ENCODE measurements at regions of chr1 and their contacts with region 1.

Region 1: GRCh38 chr1:93021539-93022134 is 57.4 kb upstream of the MTF2 start:
- DNase-seq: peak; percentile 66
- CTCF ChIP-seq: peak; percentile 81

Region 2: DNA sequence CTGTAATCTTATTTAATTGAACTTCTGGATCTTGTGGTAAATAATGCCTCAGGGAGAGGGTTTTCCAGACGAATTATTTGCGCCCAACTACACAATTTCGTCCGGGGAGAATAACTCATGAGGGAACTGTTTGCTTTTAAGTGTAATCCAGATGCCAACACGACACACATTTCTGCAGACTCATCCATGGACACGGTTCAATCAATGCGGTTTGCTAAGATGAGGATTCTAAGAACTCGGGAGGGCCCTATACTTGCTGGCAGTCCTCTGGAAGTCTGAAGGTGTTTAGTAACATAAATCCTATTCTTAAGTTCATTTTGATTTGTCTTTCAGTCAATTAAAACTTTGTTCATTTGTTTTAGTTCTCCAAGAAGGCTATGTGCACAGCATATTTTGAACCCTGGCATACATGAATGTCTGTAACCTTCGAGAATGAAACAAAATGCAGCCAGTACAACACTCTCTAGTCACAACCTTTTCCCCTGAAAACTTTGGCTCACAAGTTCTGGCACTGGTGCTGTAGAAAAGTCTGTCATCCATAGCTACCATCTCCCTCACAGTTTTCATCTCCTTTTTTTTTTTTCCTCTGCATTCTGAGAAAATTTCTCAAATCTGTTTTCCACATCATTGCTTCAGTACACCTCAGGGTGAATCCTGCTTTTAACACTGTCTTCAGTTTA is 99.1 kb before region 1 on chr1:
- CTCF ChIA-PET with region 1: no interaction called
- POLR2A ChIA-PET with region 1: no interaction called
- DNase-seq: no peak
- CTCF ChIP-seq: no peak

Region 3: GRCh38 chr1:92960395-92961130 is 61.1 kb before region 1 on chr1:
- CTCF ChIA-PET with region 1: no interaction called
- POLR2A ChIA-PET with region 1: no interaction called
- DNase-seq: peak; percentile 73
- CTCF ChIP-seq: peak; percentile 77

Region 4: GRCh38 chr1:92987462-92987861 is 34.2 kb before region 1 on chr1:
- CTCF ChIA-PET with region 1: no interaction called
- POLR2A ChIA-PET with region 1: no interaction called
- DNase-seq: no peak
- CTCF ChIP-seq: no peak

Region 5: GRCh38 chr1:93007941-93008577 is 13.6 kb before region 1 on chr1:
- CTCF ChIA-PET with region 1: interaction called, 31 read pairs
- POLR2A ChIA-PET with region 1: no interaction called
- DNase-seq: no peak
- CTCF ChIP-seq: no peak

Region 6: DNA sequence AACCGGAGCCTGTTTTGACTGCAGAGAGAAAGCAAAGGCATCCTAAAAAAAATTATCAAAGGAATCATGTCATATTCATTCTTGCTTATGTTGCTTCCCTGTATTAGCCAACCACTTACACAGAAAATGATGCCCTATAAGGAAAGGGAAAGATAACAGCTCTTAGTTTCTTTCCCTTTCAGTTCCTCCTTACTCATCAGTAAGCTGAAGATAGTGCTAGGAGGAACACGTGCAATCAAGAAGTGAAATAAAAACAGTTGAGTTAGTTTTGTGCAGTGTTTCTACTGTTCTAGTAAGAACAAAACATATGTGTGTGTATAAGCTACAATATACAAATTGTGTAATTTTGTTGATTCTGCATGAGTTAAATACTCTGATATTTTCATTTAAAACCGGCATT is 12.1 kb after region 1 on chr1:
- CTCF ChIA-PET with region 1: interaction called, 27 read pairs
- POLR2A ChIA-PET with region 1: no interaction called
- DNase-seq: peak; percentile 70
- CTCF ChIP-seq: no peak

Region 7: DNA sequence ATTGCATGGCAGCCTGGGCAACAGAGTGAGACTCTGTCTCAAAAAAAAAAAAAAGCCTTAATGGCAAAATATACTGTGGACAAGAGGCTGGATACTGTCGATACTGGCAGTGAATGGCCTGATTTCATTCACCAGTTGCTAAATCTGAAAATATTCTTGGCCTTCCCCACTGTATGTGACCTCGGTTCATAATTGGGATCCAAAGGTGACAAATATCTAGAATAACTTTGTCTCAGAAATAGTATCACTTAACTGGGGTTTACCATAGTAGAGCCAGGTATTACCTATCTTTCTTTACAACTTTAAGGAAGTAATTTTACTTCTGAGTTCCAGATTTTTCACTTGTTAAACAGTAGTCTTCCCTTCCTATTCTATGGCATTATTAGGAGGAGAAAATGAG is 65.9 kb after region 1 on chr1:
- CTCF ChIA-PET with region 1: no interaction called
- POLR2A ChIA-PET with region 1: no interaction called
- DNase-seq: no peak
- CTCF ChIP-seq: no peak

Measured in GM10248 (cell line).